ENCODE measurements at regions of chr9 and their contacts with region 1.

Region 1: DNA sequence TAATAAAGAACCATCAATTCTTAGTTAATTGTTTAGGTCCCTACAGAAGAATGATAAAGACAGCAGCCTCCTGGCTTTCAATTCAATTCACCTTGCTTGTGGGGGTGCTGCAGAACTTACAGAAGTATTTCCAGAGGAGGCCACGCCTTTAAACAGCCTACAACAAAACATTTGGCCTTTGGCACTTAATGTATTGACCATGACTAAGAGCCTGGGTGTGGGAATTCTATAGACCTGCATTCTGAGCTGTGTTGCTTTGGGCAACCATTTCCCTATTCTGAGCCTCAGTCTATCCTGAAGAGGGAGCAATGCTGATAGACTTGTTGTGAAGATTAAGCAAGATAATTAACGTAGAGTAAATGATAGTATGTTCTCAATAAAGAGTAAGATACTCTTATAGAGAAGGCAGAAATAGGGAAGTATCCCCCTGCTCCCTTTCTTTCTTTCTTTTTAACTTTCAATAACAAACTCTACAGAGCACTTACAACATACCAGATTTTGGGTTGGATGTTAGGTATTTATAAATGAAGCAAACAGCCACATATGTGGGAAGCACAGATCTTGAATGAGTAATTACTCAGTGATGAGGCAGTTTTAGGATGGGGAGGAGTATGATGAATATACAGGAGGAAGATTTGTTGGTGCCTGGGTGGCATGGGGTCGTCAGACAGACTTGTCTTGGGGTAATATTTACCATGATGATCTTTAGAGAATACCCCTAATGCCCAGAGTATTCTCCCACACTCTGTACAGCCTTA is 28.4 kb downstream of the PAPPA start:
- DNase-seq: no peak
- H3K4me3 ChIP-seq: no peak overlapping the region
- H3K27ac ChIP-seq: no peak overlapping the region; the same call in 1 of the 2 replicates
- H3K4me1 ChIP-seq: no peaks in the 10 kb centered on the region
- H3K27me3 ChIP-seq: no peaks in the 10 kb centered on the region
- CTCF ChIP-seq: peak in 1 of 3 experiments; percentile 4; a peak in 1 of 4 replicates
- EP300 ChIP-seq: no peak
- POLR2A ChIP-seq: no peak
- RAD21 ChIP-seq: no peak

Region 2: DNA sequence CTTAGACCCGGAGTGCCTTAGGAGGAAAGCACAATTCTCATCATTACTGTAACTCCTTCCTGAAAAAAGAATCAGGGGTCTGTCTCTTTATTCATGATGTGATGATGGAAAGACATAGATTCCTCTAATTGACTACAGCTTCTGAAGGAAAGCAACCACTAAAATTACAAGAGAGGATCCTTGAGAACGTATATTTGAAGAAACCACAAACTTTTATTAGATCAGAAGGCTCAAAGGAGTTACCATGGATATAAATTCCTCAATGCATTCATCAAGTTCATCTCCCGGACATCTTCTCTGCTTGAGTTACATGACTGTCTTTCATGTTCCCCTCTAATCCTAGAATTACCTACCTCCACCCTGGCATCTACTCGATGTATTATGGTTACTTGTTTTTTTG is 132.6 kb before region 1 on chr9:
- CTCF ChIA-PET with region 1: no interaction called
- POLR2A ChIA-PET with region 1: no interaction called
- DNase-seq: no peak
- H3K4me3 ChIP-seq: no peak overlapping the region
- H3K27ac ChIP-seq: no peak overlapping the region
- H3K4me1 ChIP-seq: no peaks in the 10 kb centered on the region
- H3K27me3 ChIP-seq: no peaks in the 10 kb centered on the region
- CTCF ChIP-seq: no peak
- EP300 ChIP-seq: no peak
- POLR2A ChIP-seq: no peak
- RAD21 ChIP-seq: no peak

Region 3: GRCh38 chr9:116163293-116164055 is 18.6 kb before region 1 on chr9:
- CTCF ChIA-PET with region 1: interaction called, 11 read pairs
- POLR2A ChIA-PET with region 1: no interaction called
- DNase-seq: no peak
- H3K4me3 ChIP-seq: no peak overlapping the region
- H3K27ac ChIP-seq: no peak overlapping the region
- H3K4me1 ChIP-seq: no peaks in the 10 kb centered on the region
- H3K27me3 ChIP-seq: peaks cover 0 to 4% (median 1%) of the 10 kb centered on the region in 4 experiments; a peak in 3 of 7 replicates
- CTCF ChIP-seq: peak; percentile 52 to 69 (median 61)
- EP300 ChIP-seq: no peak
- POLR2A ChIP-seq: no peak
- RAD21 ChIP-seq: peak; percentile 77 to 82

Region 4: GRCh38 chr9:116171564-116171963 is 10.5 kb before region 1 on chr9:
- CTCF ChIA-PET with region 1: interaction called, 13 read pairs
- POLR2A ChIA-PET with region 1: no interaction called
- DNase-seq: no peak
- H3K4me3 ChIP-seq: no peak overlapping the region
- H3K27ac ChIP-seq: no peak overlapping the region
- H3K4me1 ChIP-seq: no peaks in the 10 kb centered on the region
- H3K27me3 ChIP-seq: no peaks in the 10 kb centered on the region
- CTCF ChIP-seq: no peak
- EP300 ChIP-seq: no peak
- POLR2A ChIP-seq: no peak
- RAD21 ChIP-seq: no peak

Region 5: DNA sequence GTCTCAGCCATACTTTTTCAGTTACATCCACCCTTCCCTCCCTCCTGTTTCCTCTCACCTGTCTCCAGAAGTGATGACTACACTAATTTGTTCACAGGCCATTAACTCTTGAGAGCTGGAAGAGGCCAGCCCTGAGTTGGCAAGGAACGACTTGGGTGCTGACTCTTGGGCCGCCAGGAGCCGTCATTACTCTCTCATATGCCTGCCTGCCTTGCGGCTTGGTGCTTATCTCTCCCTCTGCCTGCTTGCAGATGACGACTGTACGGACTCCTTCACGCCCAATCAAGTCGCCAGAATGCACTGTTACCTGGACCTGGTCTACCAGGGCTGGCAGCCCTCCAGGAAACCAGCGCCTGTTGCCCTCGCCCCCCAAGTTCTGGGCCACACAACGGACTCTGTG is 37.7 kb after region 1 on chr9:
- CTCF ChIA-PET with region 1: no interaction called
- POLR2A ChIA-PET with region 1: no interaction called
- DNase-seq: no peak
- H3K4me3 ChIP-seq: no peak overlapping the region
- H3K27ac ChIP-seq: no peak overlapping the region
- H3K4me1 ChIP-seq: no peaks in the 10 kb centered on the region
- H3K27me3 ChIP-seq: no peaks in the 10 kb centered on the region
- CTCF ChIP-seq: no peak
- EP300 ChIP-seq: no peak
- POLR2A ChIP-seq: no peak
- RAD21 ChIP-seq: no peak